ENCODE measurements at regions of chr1 and their contacts with region 1.

Region 1: DNA sequence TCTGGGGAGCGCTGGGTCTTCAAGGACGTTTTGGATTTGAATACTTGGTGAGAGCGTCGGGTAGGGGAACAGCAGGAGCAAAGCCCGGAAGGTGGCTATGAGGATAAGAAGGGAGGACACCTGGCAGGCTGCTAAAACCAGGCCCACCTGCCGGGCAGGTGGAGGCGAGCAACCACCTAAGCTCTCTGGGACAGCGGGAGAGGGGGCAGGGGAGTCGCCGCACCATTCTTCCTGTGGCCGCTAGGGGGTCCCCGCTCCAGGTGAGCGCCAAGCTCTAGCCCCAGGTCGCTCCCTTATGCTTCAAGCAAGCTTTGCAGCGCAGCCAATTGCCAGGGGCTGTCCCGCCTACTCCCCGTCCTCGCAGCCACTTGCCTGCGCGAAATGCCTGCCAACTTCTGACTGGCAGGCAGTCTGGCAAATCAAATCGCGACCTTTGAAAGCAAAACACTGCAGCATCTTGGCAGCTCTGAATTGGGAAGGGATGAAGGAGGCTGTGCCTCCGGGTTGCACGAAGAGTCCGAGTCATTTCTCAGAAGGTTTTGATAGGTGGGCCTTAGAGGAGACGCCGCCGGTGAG is at the start of gene NIPAL3:
- DNase-seq: peak; percentile 97
- H3K4me3 ChIP-seq: peak within 1 kb of the TSS; percentile 62 to 81 (median 71)
- H3K27ac ChIP-seq: peak within 1 kb of the TSS; percentile 33 to 66 (median 52)
- H3K4me1 ChIP-seq: peaks cover 24 to 46% (median 36%) of the 10 kb centered on the region in 4 donors
- H3K27me3 ChIP-seq: no peaks in the 10 kb centered on the region
- CTCF ChIP-seq: peak; percentile 73 to 82 (median 76)
- EP300 ChIP-seq: no peak
- POLR2A ChIP-seq: no peak
- total RNA-seq, gene NIPAL3: 18.3 to 31.1 (median 26.6) TPM

Region 2: GRCh38 chr1:24351918-24352627 is 63.3 kb before region 1 on chr1:
- intact Hi-C with region 1: no loop called
- DNase-seq: no peak
- H3K4me3 ChIP-seq: no peak overlapping the region
- H3K27ac ChIP-seq: no peak overlapping the region
- H3K4me1 ChIP-seq: no peaks in the 10 kb centered on the region
- H3K27me3 ChIP-seq: no peaks in the 10 kb centered on the region
- CTCF ChIP-seq: no peak
- EP300 ChIP-seq: no peak
- POLR2A ChIP-seq: no peak

Region 3: DNA sequence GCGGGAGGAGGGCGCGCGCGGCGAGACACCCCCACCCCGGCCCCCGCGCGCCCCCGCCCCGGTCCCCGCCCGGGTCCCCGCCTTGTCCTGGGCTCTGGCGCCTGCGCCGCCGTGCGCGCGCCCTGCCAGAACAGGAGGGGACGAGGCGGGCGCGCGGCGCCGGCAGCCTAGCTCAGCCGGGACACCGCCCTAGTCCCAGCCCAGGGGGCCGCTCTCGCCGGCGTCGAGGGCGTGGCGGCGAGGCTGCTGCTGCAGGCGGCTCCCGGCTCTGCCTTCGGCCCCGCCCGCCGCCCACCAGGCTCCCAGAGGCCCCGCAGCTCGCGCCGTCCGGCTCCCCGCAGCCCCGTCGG is 87.3 kb after region 1 on chr1 and contains the start of gene RCAN3:
- intact Hi-C with region 1: loop called (anchors 10 kb)
- DNase-seq: no peak
- H3K4me3 ChIP-seq: peak within 1 kb of the TSS; percentile 62 to 91 (median 78)
- H3K27ac ChIP-seq: peak within 1 kb of the TSS; percentile 78 to 87 (median 82)
- H3K4me1 ChIP-seq: peaks cover 2 to 25% (median 18%) of the 10 kb centered on the region in 4 donors
- H3K27me3 ChIP-seq: no peaks in the 10 kb centered on the region
- CTCF ChIP-seq: no peak
- EP300 ChIP-seq: no peak
- POLR2A ChIP-seq: no peak
- total RNA-seq, gene RCAN3: 5.3 to 14.0 (median 9.3) TPM

Region 4: DNA sequence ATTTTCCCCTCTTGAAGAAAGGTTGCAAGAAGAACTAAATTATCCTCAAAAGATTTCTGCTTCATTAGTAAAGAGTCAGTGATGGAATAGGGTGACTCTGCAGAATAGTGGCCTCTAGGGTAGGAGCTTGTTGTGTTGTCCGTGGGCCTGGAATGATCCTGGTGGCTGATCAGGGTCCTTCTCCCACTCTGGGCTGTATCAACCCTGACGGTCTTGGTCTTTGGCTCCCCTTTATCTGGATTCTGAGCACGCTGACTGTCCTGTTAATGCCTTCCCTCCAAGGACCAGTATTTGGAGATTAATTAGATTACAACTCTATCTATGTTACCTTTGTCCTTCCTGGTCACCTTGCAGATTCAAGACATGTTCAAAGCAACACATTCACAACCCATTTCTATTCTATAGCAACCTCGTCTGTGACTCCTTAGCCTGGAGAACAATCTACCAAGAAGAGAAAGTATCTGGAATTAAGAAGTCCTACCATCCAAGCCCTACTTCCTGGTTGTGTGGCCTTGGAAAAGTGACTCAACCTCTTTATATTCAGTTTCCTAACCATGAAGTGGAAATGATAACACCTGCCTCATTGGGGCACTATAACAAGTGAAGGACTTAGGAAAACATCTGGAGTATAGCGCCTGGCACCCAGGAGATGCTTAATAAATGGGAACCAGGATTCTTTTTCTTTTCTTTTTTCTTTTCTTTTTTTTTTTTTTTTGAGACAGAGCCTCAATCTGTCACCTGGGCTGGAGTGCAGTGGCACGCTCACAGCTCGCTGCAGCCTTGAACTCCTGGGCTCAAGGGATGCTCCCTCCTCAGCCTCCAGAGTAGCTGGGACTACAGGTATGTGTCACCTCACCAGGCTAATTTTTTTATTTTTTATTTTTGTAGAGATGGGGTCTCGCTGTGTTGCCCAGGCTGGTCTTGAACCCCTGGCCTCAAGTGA is 191.1 kb after region 1 on chr1:
- intact Hi-C with region 1: no loop called
- DNase-seq: no peak
- H3K4me3 ChIP-seq: no peak overlapping the region
- H3K27ac ChIP-seq: no peak overlapping the region
- H3K4me1 ChIP-seq: no peaks in the 10 kb centered on the region
- H3K27me3 ChIP-seq: peaks cover 0 to 8% (median 0%) of the 10 kb centered on the region in 4 donors
- CTCF ChIP-seq: no peak
- EP300 ChIP-seq: no peak
- POLR2A ChIP-seq: no peak

Region 5: DNA sequence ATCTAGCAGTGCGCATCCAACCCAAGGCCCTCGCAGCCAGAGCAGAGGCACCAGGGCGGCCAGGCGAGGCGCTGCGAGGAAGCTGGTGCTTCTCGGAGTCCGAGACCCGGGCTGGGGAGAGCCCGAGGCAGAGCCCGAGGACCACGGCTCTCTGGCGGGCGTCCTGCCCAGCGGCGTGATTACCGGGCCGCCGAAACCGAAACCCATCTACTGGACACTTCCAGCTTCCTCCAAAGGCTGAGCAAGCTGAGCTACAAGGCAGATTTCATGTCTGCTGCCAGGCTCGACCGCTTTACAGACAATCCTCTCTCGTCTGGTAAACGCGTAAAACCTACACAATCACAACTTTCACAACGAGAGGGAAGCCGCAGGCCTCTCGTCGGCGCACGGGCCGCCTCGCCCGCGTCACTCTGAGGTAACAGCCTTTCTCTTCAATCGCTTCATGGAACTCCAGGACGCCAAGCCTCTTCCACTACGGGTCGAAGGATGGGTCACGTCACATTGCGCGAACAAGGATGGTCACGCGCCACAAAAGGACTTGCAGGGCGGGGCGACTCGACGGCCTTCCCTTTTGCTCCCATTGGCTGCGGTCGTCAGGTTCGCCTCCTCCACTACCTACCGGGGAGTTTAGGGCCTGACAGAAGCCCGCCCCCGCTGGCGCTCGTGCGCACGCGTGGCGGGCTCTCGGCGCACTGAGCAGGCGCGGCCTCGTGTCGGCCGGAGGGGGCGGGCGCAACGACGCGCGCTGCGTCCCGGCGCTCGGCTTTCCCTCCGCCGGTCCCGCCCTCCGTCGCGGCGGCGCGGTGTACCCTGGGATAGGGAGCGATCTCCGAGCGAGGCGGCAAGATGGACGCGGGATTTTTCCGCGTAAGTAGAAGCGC is 227.3 kb after region 1 on chr1 and contains the start of gene SRRM1:
- intact Hi-C with region 1: loop called (anchors 5 kb)
- DNase-seq: peak; percentile 100
- H3K4me3 ChIP-seq: peak within 1 kb of the TSS; percentile 78 to 96 (median 92)
- H3K27ac ChIP-seq: peak within 1 kb of the TSS; percentile 96 to 100 (median 99)
- H3K4me1 ChIP-seq: peaks cover 24 to 47% (median 39%) of the 10 kb centered on the region in 4 donors
- H3K27me3 ChIP-seq: no peaks in the 10 kb centered on the region
- CTCF ChIP-seq: peak in 1 of 3 experiments; percentile 4
- EP300 ChIP-seq: no peak
- POLR2A ChIP-seq: peak; percentile 99
- total RNA-seq, gene SRRM1: 61.6 to 87.6 (median 63.6) TPM

Measured in esophagus muscularis mucosa (tissue), 4 donors.